ENCODE measurements at regions of chr4 and their contacts with region 1.

Region 1: DNA sequence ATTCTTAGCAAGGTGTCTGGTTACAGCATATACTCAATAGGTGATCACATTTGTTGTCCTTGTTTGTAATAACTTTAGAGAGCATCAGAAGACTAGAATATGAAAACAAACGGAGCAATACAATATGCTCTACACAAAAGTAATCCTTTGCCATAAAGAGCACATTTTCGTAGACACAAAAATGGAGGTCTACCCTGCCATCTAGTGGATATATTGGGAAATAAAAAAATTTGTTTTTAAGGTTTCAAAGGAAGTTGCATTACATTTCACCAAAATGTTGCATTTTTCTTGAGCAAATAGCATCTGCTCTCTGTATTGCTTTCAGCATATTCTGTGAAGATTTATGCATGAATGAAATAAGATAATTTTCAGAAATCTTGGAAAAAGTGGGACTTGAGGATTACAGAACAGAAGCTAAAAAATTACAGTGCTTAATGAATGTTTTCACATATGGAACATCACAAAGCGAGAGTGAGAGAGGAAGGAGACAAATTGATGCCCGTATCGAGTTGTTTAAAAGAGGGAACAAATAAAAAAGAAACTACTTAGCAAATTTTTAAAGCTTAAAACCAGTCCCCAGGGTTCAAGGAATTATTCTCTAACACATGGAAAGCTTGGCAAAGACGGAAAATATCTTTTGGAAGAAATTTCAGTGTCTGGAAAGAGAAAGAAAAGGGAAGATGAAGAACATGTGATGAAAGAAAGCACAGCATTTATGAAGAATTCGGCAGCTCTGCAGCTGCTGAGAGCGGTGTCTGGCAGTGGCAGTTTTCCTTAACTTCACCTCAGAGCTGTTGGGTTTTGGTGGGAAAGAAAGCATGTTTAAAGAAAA is 390.1 kb downstream of the ANKRD50 start:
- DNase-seq: no peak
- H3K4me3 Mint-ChIP-seq: no peak overlapping the region
- H3K27ac Mint-ChIP-seq: no peak overlapping the region
- H3K4me1 Mint-ChIP-seq: no peaks in the 10 kb centered on the region
- H3K27me3 Mint-ChIP-seq: peaks cover 8% of the 10 kb centered on the region

Region 2: GRCh38 chr4:123102897-123103471 is 1219.5 kb before region 1 on chr4:
- CTCF ChIA-PET with region 1: no interaction called
- intact Hi-C with region 1: loop called (anchors 1 kb)
- DNase-seq: no peak
- H3K4me3 Mint-ChIP-seq: no peak overlapping the region
- H3K27ac Mint-ChIP-seq: no peak overlapping the region
- H3K4me1 Mint-ChIP-seq: no peaks in the 10 kb centered on the region
- H3K27me3 Mint-ChIP-seq: no peaks in the 10 kb centered on the region

Region 3: DNA sequence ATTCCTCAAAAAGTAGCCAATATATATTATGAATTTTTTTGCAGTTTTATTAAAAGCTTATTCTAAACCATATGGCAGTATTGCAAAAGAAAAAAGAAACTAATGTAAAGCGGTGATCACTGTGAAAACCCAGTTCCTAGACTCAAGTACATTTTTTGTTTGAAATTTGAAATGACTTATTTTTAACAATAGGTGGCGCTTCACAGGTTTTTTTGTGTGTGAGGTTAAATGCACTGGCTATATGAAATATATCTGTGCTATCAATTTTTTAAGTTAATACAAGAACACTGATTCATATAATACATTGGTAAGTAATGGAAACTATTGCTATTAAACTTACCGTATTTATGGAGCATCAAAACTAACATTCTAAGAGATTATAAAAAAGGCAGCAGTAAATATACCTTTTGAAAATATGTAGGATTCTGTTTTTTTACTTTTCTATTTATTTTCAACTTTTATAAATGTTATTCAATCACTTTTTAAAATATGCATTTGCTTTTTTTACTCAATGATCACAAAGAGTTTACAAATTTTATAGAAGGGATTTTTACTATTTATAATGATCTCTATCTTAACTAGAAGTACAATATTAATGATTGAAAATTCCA is 931.5 kb before region 1 on chr4:
- CTCF ChIA-PET with region 1: no interaction called
- intact Hi-C with region 1: loop called (anchors 5 kb)
- DNase-seq: no peak
- H3K4me3 Mint-ChIP-seq: no peak overlapping the region
- H3K27ac Mint-ChIP-seq: no peak overlapping the region
- H3K4me1 Mint-ChIP-seq: no peaks in the 10 kb centered on the region
- H3K27me3 Mint-ChIP-seq: peaks cover 3% of the 10 kb centered on the region

Region 4: DNA sequence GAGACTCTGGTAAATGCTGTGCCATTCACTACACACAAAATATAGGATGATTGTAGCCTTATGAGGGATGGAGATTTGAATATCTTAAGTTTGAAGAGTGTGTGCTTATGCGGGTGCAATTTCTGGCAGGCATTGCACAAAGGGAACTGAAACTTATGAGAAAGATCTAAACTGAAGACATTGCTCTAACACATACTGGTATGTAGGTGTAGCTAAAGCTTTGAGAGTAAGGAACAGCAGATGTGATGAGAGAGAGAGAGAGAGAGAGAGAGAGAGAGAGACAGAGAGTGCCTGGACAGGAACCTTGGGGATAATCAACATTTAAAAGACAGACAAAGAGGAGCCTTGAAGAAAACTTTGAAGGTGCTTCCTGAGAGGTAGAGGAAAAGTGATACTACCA is 546.2 kb before region 1 on chr4:
- CTCF ChIA-PET with region 1: interaction called, 3 read pairs
- intact Hi-C with region 1: loop called (anchors 1 kb)
- DNase-seq: no peak
- H3K4me3 Mint-ChIP-seq: no peak overlapping the region
- H3K27ac Mint-ChIP-seq: no peak overlapping the region
- H3K4me1 Mint-ChIP-seq: peaks cover 6% of the 10 kb centered on the region
- H3K27me3 Mint-ChIP-seq: peaks cover 7% of the 10 kb centered on the region

Measured in activated naive CD4-positive, alpha-beta T cell treated with anti-CD3 and anti-CD28 coated beads for 36 hours (primary cell).